ENCODE measurements at regions of chr11 and their contacts with region 1.

Region 1: GRCh38 chr11:27698872-27699474 is 1.3 kb downstream of the BDNF start:
- DNase-seq: peak; percentile 97
- H3K4me3 ChIP-seq: peak overlapping the region; percentile 40
- H3K27ac ChIP-seq: no peak overlapping the region
- H3K4me1 ChIP-seq: peaks cover 27% of the 10 kb centered on the region
- H3K27me3 ChIP-seq: peaks cover 97% of the 10 kb centered on the region
- CTCF ChIP-seq: peak; percentile 100

Region 2: GRCh38 chr11:28529540-28530410 is 830.8 kb after region 1 on chr11:
- CTCF ChIA-PET with region 1: interaction called, 55 read pairs
- POLR2A ChIA-PET with region 1: no interaction called
- intact Hi-C with region 1: loop called (anchors 1 kb)
- DNase-seq: peak; percentile 89
- H3K4me3 ChIP-seq: no peak overlapping the region
- H3K27ac ChIP-seq: no peak overlapping the region
- H3K4me1 ChIP-seq: no peaks in the 10 kb centered on the region
- H3K27me3 ChIP-seq: peaks cover 38% of the 10 kb centered on the region
- CTCF ChIP-seq: peak; percentile 93

Region 3: GRCh38 chr11:28697920-28698827 is 999.2 kb after region 1 on chr11:
- CTCF ChIA-PET with region 1: interaction called, 11 read pairs
- POLR2A ChIA-PET with region 1: no interaction called
- intact Hi-C with region 1: loop called (anchors 2 kb)
- DNase-seq: peak; percentile 93
- H3K4me3 ChIP-seq: no peak overlapping the region
- H3K27ac ChIP-seq: no peak overlapping the region
- H3K4me1 ChIP-seq: peaks cover 13% of the 10 kb centered on the region
- H3K27me3 ChIP-seq: no peaks in the 10 kb centered on the region
- CTCF ChIP-seq: peak; percentile 100

Region 4: GRCh38 chr11:29005401-29005980 is 1306.5 kb after region 1 on chr11:
- CTCF ChIA-PET with region 1: interaction called, 6 read pairs
- POLR2A ChIA-PET with region 1: no interaction called
- intact Hi-C with region 1: loop called (anchors 5 kb)
- DNase-seq: peak; percentile 74
- H3K4me3 ChIP-seq: no peak overlapping the region
- H3K27ac ChIP-seq: no peak overlapping the region
- H3K4me1 ChIP-seq: peaks cover 5% of the 10 kb centered on the region
- H3K27me3 ChIP-seq: no peaks in the 10 kb centered on the region
- CTCF ChIP-seq: peak; percentile 72

Region 5: DNA sequence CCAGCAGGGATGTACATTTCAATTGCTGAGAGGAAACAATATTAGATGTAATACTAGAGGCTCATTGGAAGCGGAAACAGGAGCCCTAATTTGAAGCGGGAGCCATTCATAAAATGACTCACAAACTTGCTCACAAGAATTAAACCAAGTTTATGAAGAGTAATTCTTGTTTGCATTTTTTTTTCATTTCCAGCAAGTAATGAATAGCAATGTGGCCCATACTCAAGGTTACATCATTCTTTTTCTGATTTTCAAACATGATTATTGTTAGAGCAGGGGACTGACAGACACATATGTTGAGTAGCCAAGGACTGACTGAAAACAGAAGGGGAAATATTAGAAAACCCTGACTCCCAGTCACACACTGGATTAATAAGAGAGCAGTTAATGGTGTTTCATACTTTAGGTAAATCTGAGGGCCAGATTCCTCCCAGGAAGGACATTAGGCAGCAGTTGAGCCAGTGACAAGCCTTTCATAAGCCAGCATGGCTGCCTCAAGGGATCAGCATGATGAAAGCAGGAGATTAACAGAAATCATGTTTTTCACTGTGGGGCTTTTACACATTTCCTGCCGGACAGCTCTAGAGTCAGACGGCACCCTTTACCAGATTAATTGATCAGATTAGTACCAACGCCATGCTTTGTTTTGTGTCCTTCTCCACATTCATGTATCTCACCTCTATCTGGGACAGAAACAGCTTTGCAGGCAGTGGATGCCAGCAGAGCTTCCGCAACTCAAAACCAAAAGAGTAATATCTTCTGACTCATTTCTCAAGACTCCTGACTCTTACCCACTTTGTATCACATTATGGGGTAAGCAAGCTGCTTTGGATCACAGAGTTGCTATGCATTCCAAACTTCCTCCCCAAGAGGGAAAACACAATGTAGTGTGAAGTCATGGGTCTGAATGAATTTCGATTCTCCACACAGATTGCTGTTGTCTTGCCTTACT is 1486.2 kb after region 1 on chr11:
- CTCF ChIA-PET with region 1: no interaction called
- POLR2A ChIA-PET with region 1: no interaction called
- intact Hi-C with region 1: loop called (anchors 1 kb)
- DNase-seq: peak; percentile 100
- H3K4me3 ChIP-seq: peak overlapping the region; percentile 17
- H3K27ac ChIP-seq: peak overlapping the region; percentile 95
- H3K4me1 ChIP-seq: peaks cover 51% of the 10 kb centered on the region
- H3K27me3 ChIP-seq: no peaks in the 10 kb centered on the region
- CTCF ChIP-seq: no peak

Region 6: DNA sequence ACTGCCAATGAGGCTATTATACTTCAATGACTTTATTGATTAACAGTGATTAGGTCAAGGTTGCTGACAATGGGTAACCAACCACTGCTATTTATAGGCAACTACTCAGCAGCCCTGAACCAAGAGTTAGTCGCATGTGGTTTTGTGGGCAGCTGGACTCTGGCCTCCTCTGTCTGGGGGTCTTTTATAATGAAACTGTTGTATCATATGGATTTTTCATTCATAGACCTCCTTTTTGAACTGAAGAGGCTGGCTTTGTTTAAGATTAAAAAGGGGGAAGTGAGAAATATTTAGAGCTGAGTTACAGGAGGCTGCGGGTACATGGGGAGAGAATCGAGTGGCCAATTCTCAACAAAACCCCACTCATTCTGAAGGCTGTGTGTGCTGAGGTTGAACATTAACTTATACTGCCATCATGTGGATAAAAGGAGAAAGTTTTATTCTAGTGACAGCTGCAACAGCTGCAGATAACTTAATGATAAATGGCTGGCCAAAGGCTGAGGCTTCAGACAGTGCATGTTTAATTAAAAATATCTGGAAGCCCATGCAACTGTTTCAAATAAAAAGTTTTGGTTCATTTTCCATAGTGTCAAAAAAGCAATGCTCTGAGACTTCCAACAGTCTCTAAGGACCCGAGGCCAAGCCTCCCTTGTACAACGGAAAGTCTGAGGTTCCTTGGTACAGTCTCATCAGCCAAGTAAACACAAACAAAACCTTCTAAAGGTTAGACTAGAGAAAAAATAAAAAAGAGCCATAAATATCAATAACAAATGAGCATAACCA is 1635.2 kb after region 1 on chr11:
- CTCF ChIA-PET with region 1: interaction called, 45 read pairs
- POLR2A ChIA-PET with region 1: no interaction called
- intact Hi-C with region 1: loop called (anchors 1 kb)
- DNase-seq: peak; percentile 92
- H3K4me3 ChIP-seq: no peak overlapping the region
- H3K27ac ChIP-seq: no peak overlapping the region
- H3K4me1 ChIP-seq: no peaks in the 10 kb centered on the region
- H3K27me3 ChIP-seq: peaks cover 72% of the 10 kb centered on the region
- CTCF ChIP-seq: peak; percentile 88

Measured in A673 (cell line).